Activated T-helper 1 cell treated with anti-CD3 and anti-CD28 coated beads, Interleukin-12 subunit alpha, Interleukin-12 subunit beta, Interleukin-2, Interleukin-4 antibody, amounts not matched to agents 30 ng/mL and 10 ng/mL and 1 ng/mL, durations not matched to agents 14 hours and 24 hours and 36 hours (primary cell): ENCODE measurements at regions of chr3 and their contacts with region 1.

Region 1: DNA sequence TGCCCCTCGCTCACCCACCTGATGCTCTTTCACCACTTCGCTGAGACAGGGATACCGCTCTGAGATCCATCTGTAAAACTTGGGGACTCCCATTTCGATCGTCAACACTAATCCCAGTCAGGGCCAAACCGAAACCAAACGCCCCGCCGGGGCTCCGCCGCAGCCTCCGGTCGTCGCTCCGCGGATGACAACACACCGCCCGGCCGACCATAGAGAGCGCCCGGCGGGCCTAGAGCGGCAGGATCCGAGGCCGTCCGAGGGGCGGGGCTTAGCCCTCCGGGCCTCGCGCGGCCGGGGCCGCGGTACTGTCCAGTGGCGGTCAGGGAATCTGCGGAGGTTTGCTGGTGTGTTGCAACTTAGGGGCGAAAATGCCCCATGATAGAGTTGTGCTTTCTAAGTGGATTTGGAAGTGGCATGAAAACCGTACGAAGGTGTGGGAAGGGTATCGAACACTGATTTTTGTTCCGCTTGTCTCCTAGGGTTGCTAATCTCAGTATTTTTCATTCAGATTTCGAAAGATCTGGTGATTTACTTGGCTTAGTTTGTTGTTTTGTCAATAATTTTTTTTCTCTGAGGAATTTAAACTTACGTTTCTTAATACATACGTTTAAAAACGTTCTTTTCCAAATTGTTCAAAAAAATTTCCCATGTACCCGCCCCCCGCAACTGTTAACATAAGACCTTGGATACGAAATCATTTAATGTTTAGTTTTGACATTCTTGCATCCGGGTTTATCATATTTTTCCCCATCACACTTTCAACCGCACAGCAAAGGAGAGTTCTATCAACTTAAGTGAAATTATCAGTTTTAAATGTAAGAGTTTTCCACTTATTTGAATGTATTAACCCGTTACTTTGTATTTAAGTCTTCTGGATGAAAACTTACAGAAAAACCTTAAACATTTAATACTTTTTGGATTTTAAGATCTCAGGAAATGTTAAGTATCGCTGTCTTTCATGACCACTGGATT is at the start of gene XRN1:
- DNase-seq: peak; percentile 94
- H3K4me3 Mint-ChIP-seq: peak within 1 kb of the TSS; percentile 99
- H3K27ac Mint-ChIP-seq: peak within 1 kb of the TSS; percentile 99
- H3K4me1 Mint-ChIP-seq: peaks cover 44% of the 10 kb centered on the region
- H3K27me3 Mint-ChIP-seq: no peaks in the 10 kb centered on the region
- total RNA-seq, gene XRN1: 48.0 and 52.7 TPM in 2 replicates

Region 2: DNA sequence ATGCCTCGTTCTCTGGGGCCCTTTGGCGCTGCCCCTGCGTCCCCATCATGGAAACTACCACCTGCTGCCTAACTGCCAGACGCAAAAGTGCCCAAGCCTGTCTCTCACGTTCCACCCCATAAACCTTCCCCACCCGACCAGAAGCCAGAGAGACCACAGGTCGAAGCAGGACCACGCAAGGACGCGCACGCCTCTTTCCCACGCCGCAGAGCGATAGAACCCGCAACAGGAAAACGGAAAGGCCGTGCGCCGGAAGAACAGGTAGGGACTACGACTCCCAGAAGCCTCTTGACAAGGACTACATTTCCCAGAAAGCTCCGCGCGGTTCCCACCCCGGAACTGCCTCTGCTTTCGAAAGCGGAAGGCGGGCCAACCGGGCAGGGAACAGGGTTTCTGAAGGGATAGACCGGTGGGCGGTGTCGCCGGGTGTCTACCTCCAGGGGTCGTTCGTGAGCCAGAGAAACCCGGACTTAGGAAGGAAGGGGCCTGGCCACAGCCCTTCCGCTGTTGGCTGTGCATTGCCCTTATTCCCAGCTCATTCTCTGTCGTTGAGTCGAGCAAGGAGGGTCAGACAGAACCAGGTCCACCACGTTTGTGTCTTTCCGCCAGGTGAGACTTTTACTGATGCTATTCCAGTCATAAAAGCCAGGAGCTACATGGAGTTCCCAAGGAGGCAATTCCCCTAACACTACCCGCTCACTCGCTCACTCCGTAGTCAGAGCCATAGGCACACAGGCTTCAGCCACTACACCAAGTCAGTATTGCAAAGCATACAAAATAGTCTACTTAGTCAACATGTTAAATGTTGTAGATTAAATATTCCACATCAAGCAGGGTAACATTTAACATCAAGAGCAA is 1136.4 kb before region 1 on chr3:
- intact Hi-C with region 1: loop called (anchors 5 kb)
- DNase-seq: peak; percentile 97
- H3K4me3 Mint-ChIP-seq: peak overlapping the region; percentile 95
- H3K27ac Mint-ChIP-seq: peak overlapping the region; percentile 98
- H3K4me1 Mint-ChIP-seq: peaks cover 51% of the 10 kb centered on the region
- H3K27me3 Mint-ChIP-seq: no peaks in the 10 kb centered on the region

Region 3: DNA sequence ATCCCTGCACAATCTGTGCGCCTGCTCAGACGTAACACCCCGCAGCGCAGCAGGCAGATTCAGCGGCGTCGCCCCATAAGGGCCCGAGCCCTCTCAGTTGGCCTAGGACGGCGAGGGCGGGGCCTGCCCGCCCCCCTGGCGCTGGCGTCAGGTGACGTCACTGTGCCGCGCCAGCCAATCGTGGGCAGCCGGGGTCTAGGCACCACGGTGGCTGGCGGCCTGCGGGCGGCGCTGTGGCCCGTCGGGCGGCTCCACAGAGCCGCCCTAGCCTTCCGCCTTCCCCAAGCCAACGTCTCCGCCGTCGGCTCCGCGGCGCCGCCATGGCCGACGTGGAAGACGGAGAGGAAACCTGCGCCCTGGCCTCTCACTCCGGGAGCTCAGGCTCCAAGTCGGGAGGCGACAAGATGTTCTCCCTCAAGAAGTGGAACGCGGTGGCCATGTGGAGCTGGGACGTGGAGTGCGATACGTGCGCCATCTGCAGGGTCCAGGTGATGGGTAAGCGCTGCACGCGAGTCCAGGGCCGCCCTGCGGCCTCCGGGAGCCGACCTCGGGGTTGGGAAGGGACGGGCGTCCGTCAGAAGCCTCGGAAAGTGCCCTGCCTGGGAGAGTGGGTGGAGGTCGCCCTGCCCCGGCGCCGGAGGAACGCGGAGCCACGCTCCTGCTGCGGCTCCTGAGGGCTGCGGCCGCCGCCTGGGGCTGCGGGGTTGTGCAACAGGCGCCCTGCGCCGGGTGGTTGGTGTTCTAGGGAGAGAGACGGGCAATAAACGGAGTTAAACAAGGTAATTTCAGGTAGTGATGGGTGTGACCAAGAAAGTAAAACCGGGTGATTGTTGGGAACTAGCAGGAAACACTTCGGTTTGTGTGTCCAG is 709.9 kb before region 1 on chr3 and contains the start of gene RNF7:
- intact Hi-C with region 1: loop called (anchors 1 kb)
- DNase-seq: peak; percentile 97
- H3K4me3 Mint-ChIP-seq: peak within 1 kb of the TSS; percentile 100
- H3K27ac Mint-ChIP-seq: peak within 1 kb of the TSS; percentile 99
- H3K4me1 Mint-ChIP-seq: peaks cover 30% of the 10 kb centered on the region
- H3K27me3 Mint-ChIP-seq: peaks cover 5% of the 10 kb centered on the region
- total RNA-seq, gene RNF7: 70.5 and 70.9 TPM in 2 replicates

Region 4: GRCh38 chr3:142148792-142149672 is 299.1 kb before region 1 on chr3 and contains the start of gene TFDP2:
- intact Hi-C with region 1: loop called (anchors 1 kb)
- DNase-seq: peak; percentile 88
- H3K4me3 Mint-ChIP-seq: peak within 1 kb of the TSS; percentile 90
- H3K27ac Mint-ChIP-seq: peak within 1 kb of the TSS; percentile 80
- H3K4me1 Mint-ChIP-seq: peaks cover 18% of the 10 kb centered on the region
- H3K27me3 Mint-ChIP-seq: peaks cover 4% of the 10 kb centered on the region
- total RNA-seq, gene TFDP2: 19.7 and 27.5 TPM in 2 replicates

Region 5: DNA sequence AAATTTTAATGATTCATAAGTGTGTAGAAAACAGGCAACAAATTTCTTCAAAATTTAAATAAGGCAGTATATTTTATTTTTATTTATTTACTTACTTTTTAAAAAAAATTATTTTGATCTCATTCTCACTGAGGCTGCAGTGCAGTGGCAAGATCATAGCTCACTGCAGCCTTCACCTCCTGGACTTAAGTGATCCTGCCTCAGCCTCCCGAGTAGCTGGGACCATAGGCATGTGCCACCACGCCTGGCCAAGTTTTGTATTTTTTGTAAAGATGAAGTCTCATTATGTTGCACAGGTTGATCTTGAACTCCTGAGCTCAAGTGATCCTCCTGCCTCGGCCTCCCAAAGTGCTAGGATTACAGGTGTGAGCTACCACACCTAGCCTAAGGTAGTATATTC is 60.9 kb after region 1 on chr3:
- intact Hi-C with region 1: loop called (anchors 1 kb)
- DNase-seq: no peak
- H3K4me3 Mint-ChIP-seq: peak overlapping the region; percentile 75
- H3K27ac Mint-ChIP-seq: peak overlapping the region; percentile 88
- H3K4me1 Mint-ChIP-seq: peaks cover 12% of the 10 kb centered on the region
- H3K27me3 Mint-ChIP-seq: no peaks in the 10 kb centered on the region

Region 6: DNA sequence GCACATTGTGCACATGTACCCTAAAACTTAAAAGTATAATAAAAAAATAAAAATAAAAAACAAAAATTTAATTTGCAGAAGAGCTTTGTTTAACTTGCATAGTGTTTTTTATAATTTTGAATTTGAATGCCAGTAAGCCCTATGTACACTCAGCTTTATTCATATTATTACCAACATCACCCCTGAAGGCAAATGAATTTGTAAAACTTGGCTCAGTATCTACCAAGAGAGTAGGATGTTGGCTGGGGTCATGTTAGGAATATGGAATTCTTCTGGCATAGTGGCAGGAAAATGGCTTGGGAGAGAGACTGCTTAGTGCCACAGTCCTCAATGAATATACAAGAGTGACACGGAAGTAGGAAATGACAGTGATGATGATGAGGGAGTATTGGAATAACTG is 306.4 kb after region 1 on chr3:
- intact Hi-C with region 1: no loop called
- DNase-seq: no peak
- H3K4me3 Mint-ChIP-seq: no peak overlapping the region
- H3K27ac Mint-ChIP-seq: no peak overlapping the region
- H3K4me1 Mint-ChIP-seq: no peaks in the 10 kb centered on the region
- H3K27me3 Mint-ChIP-seq: peaks cover 3% of the 10 kb centered on the region

Region 7: GRCh38 chr3:143001369-143002082 is 553.4 kb after region 1 on chr3 and contains the start of gene U2SURP:
- intact Hi-C with region 1: loop called (anchors 1 kb)
- DNase-seq: peak; percentile 91
- H3K4me3 Mint-ChIP-seq: peak within 1 kb of the TSS; percentile 95
- H3K27ac Mint-ChIP-seq: peak within 1 kb of the TSS; percentile 96
- H3K4me1 Mint-ChIP-seq: peaks cover 45% of the 10 kb centered on the region
- H3K27me3 Mint-ChIP-seq: peaks cover 6% of the 10 kb centered on the region
- total RNA-seq, gene U2SURP: 186 and 205 TPM in 2 replicates

Region 8: DNA sequence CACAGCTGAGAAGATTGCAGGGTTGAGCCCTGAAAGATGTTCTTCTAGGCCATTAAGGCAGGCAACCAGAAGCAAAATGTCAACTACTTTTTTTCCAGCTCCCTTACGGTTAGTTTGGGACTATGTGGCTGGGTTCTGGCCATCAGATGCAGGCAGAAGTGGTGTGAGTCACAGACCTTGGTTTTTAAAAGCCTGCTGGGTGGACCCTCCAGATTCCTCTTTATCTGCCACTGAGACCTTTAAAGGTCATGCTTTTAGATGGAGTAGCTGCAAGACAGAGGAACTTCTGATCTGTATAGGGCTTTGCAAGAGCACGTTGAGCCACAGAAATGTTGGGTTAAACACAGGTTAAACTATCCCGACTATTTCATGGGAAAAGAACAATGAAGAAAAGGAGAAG is 774.4 kb after region 1 on chr3:
- intact Hi-C with region 1: no loop called
- DNase-seq: no peak
- H3K4me3 Mint-ChIP-seq: no peak overlapping the region
- H3K27ac Mint-ChIP-seq: no peak overlapping the region
- H3K4me1 Mint-ChIP-seq: peaks cover 5% of the 10 kb centered on the region
- H3K27me3 Mint-ChIP-seq: no peaks in the 10 kb centered on the region